CD14-positive monocyte (primary cell): ENCODE measurements at regions of chr1 and their contacts with region 1.

Region 1: GRCh38 chr1:157163273-157164127 is 25.3 kb upstream of the ETV3 start:
- DNase-seq: peak; percentile 44 to 64 (median 58)
- H3K4me3 ChIP-seq: no peak overlapping the region
- H3K4me3 Mint-ChIP-seq: peak overlapping the region in 1 of 2 donors; percentile 78
- H3K27ac ChIP-seq: no peak overlapping the region
- H3K27ac Mint-ChIP-seq: peak overlapping the region in 1 of 7 donors; percentile 61
- H3K4me1 ChIP-seq: no peaks in the 10 kb centered on the region
- H3K4me1 Mint-ChIP-seq: peaks cover 9% of the 10 kb centered on the region
- H3K27me3 ChIP-seq: no peaks in the 10 kb centered on the region
- H3K27me3 Mint-ChIP-seq: peaks cover 2 to 14% (median 3%) of the 10 kb centered on the region in 3 donors
- CTCF ChIP-seq: peak; percentile 92

Region 2: DNA sequence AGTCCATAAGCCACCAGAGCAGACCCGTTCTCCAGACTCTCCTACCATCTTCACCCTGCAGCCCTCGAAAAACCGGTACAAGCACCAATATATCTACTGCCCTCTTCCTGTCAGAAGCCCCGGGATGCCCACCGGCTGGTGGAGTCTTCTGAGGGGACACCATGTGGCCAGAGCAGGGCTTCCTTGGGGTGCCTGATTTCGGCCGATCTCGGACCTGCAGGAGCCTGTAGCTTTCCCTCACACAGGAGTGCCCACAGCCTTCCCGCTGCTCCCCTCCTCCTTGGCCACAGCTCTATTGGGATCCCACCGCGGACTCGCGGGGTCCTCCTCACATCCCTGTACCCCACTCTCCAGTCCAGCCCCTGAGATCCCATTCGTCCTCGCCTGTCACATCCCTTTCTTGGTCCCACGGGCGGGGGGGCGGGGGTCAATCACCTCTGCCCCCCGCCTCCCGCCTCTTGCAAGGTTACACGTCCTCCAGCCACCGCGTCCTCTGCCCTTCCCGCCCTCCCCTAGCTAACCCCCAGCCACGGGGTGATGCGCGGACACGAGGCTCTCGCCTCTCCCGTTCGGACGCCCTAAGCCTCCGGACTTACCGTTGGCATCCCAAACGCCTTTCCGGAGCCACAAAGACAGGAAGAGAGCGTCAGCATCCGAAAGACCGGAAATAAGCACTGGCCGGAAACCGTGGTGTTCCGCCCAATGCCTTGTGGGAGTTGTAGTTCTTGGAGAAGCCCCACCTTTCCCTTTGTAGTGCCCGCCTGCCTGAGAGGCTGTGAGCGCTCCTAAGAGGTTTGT is 1143.0 kb before region 1 on chr1 and contains the start of gene SSR2:
- intact Hi-C with region 1: no loop called
- DNase-seq: peak; percentile 80 to 89 (median 87)
- H3K4me3 ChIP-seq: peak within 1 kb of the TSS; percentile 51 to 92 (median 81)
- H3K4me3 Mint-ChIP-seq: peak within 1 kb of the TSS; percentile 91 to 94
- H3K27ac ChIP-seq: peak within 1 kb of the TSS; percentile 45 to 81
- H3K27ac Mint-ChIP-seq: peak within 1 kb of the TSS; percentile 84 to 97 (median 92)
- H3K4me1 ChIP-seq: peaks cover 18 to 23% of the 10 kb centered on the region in 2 donors
- H3K4me1 Mint-ChIP-seq: peaks cover 15% of the 10 kb centered on the region
- H3K27me3 ChIP-seq: no peaks in the 10 kb centered on the region
- H3K27me3 Mint-ChIP-seq: peaks cover 9 to 10% (median 10%) of the 10 kb centered on the region in 3 donors
- CTCF ChIP-seq: no peak
- polyA plus RNA-seq, gene SSR2: 374 to 614 (median 414) TPM

Region 3: DNA sequence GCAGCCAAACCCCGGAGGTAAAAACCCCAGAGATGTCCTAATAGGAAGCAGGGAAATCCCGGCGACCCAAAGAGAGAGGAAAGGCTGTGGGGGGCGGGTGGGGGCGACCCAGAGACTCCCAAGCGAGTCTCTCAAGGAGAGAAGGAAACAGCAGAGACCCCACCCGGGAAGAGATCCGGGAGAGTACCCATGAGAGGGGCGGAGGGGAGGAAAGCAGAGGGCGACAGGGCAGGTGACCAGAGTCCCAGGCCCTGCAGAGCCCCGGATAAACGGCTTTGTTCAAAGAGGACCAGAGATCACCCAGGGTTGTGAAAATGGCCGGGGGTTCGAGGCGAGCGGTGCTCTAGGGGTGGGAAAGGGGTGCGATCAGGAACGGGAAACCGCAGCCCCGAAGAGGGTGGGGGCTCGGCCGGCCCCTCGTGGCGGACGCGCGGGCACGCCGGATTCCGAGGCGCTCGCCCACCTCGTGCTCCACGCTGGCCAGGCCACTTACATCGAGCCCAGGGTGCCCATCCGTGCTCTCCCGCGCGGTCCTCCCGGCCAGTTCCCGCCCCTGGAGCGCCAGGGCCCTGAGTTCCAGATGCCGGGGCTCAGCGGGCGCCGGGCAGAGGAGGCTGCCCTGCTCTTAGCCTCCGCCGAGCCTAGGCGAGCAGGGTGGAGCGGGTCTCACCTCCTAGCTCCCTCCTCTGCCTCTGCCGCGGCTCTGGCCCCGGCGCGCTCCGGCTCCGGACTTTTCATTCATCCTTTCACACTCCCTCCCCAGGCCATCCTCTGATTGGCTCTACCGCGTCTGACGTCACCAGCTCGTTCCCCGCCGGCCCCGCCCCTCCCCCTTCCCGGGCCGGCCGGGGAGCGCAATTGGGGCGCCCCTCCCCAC is 742.2 kb before region 1 on chr1:
- intact Hi-C with region 1: loop called in 1 of 2 experiments (anchors 5 kb)
- DNase-seq: peak; percentile 55 to 92 (median 63)
- H3K4me3 ChIP-seq: peak overlapping the region in 2 of 3 experiments; percentile 31 to 73
- H3K4me3 Mint-ChIP-seq: peak overlapping the region; percentile 79 to 95
- H3K27ac ChIP-seq: no peak overlapping the region
- H3K27ac Mint-ChIP-seq: peak overlapping the region in 3 of 7 donors; percentile 66 to 81 (median 73)
- H3K4me1 ChIP-seq: peaks cover 24 to 26% of the 10 kb centered on the region in 2 donors
- H3K4me1 Mint-ChIP-seq: peaks cover 27% of the 10 kb centered on the region
- H3K27me3 ChIP-seq: peaks cover 79 to 100% of the 10 kb centered on the region in 2 donors
- H3K27me3 Mint-ChIP-seq: peaks cover 92 to 97% (median 96%) of the 10 kb centered on the region in 3 donors
- CTCF ChIP-seq: no peak